Activated T-helper 1 cell treated with anti-CD3 and anti-CD28 coated beads, Interleukin-12 subunit alpha, Interleukin-12 subunit beta, Interleukin-2, Interleukin-4 antibody, amounts not matched to agents 30 ng/mL and 10 ng/mL and 1 ng/mL, durations not matched to agents 14 hours and 24 hours and 36 hours (primary cell): ENCODE measurements at regions of chr1 and their contacts with region 1.

Region 1: DNA sequence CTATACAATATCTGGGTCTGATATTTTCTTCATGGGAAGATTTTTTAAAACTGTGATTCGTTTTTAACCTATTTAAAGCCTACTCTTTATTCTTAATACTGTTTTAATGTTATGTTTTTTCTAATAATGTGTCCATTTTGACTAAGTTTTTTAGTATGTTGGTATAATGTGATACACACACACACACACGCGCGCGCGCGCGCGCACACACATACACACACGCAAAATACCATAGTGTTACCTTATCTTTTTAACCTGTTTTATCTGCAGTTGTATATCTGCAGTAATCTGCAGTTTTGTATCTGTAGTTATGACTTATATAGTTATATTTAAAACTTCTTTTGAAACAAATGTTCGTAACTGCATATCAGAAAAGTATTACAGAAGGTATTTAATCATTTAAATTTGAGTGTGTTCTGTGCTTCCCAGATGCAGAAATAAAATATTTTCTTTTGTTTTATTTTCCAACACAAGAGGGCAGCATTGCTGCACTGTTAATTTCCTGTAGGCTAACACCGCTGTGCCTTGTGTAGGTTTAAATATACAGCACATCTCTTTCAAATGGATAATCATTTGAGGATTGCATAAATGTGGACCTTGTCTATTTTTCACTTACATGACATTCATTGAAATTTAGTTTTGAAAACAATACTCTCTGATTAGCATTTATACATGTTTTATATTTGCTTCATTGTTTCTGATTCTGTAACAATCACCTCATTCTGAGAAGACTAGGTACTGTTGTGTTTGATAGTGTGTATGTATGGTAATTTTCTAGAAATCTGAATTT is 166.1 kb downstream of the PDE4B start:
- DNase-seq: peak; percentile 10
- H3K4me3 Mint-ChIP-seq: no peak overlapping the region
- H3K27ac Mint-ChIP-seq: no peak overlapping the region
- H3K4me1 Mint-ChIP-seq: peaks cover 14% of the 10 kb centered on the region
- H3K27me3 Mint-ChIP-seq: peaks cover 2% of the 10 kb centered on the region

Region 2: DNA sequence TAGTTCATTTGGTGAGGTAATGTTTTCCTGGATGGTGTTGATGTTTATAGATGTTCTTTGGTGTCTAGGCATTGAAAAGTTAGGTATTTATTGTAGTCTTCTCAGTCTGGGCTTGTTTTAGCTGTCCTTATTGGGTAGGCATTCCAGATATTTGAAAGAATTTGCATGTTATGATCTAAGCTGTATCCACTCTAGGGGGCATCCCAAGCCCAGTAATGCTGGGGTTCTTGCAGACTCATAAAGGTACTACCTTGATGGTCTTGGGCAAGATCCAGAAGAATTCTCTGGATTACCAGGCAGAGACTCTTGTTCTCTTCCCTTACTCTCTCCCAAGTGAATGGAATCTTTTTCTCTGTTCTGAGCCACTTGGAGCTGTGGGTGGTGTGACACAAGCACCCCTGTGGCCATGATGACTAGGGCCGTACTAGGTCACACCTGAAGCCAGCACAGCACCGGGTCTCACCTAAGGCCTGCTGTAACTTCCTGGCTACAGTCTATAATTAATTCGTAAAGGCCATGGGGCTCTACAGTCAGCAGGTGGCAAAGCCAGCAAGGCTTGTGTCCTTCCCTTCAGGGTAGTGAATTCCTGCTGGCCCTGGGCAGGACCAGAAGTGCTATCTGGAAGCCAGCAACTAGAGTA is 240.8 kb before region 1 on chr1:
- intact Hi-C with region 1: loop called (anchors 5 kb)
- DNase-seq: no peak
- H3K4me3 Mint-ChIP-seq: no peak overlapping the region
- H3K27ac Mint-ChIP-seq: no peak overlapping the region
- H3K4me1 Mint-ChIP-seq: no peaks in the 10 kb centered on the region
- H3K27me3 Mint-ChIP-seq: peaks cover 29% of the 10 kb centered on the region

Region 3: GRCh38 chr1:66503841-66504470 is 545.2 kb after region 1 on chr1:
- intact Hi-C with region 1: loop called (anchors 2 kb)
- DNase-seq: no peak
- H3K4me3 Mint-ChIP-seq: no peak overlapping the region
- H3K27ac Mint-ChIP-seq: no peak overlapping the region
- H3K4me1 Mint-ChIP-seq: no peaks in the 10 kb centered on the region
- H3K27me3 Mint-ChIP-seq: peaks cover 31% of the 10 kb centered on the region

Region 4: GRCh38 chr1:66725885-66726665 is 767.3 kb after region 1 on chr1:
- intact Hi-C with region 1: loop called (anchors 2 kb)
- DNase-seq: peak; percentile 54
- H3K4me3 Mint-ChIP-seq: no peak overlapping the region
- H3K27ac Mint-ChIP-seq: no peak overlapping the region
- H3K4me1 Mint-ChIP-seq: peaks cover 19% of the 10 kb centered on the region
- H3K27me3 Mint-ChIP-seq: peaks cover 12% of the 10 kb centered on the region